Activated CD4-positive, alpha-beta memory T cell treated with anti-CD3 and anti-CD28 coated beads for 36 hours (primary cell): ENCODE measurements at regions of chr19 and their contacts with region 1.

Region 1: DNA sequence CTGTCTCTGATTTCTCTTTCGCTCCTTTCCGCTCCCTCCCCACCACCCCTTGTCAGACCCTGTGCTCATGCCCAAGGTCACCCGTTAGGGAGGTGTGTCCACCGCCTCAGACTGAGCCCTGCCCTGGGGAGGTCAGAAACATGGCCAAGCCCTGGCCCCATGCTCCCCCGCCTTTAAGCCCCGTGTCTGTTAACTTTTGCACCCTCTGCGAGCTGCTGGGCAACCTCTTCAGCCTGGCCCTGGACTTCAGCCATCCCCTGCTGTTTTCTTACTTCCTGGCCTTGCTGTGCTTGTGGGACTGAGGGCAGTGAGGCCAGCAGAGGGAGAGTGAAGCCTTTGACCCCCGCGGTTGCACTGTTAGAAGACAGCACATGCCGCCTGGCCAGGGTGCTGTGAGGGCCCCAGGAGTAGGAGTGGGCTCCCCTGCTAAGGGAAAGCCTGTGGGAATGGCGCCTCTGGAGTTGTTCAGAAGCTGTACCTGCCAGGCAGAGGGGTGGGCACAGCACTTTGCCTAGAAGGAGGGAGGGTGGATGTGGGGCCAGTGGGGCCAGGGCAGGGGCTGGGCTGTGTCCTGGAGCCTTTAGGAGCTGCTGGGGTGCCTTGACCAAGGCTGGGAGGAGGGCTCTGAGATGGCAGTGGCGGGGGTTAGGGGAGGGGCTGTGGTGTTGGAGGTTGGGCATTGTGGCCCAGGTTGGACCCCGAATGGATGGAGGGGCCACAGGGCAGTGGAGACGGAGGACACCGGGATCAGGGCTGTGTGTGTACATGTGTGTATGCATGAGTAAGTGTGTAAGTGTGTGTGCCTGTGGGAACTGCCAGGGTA is 7.9 kb downstream of the UPF1 start:
- DNase-seq: no peak
- H3K4me3 Mint-ChIP-seq: no peak overlapping the region
- H3K27ac Mint-ChIP-seq: peak overlapping the region; percentile 81
- H3K4me1 Mint-ChIP-seq: peaks cover 90% of the 10 kb centered on the region
- H3K27me3 Mint-ChIP-seq: no peaks in the 10 kb centered on the region

Region 2: GRCh38 chr19:18785179-18786128 is 54.2 kb before region 1 on chr19:
- CTCF ChIA-PET with region 1: no interaction called
- POLR2A ChIA-PET with region 1: no interaction called
- intact Hi-C with region 1: loop called (anchors 5 kb)
- DNase-seq: peak; percentile 83
- H3K4me3 Mint-ChIP-seq: no peak overlapping the region
- H3K27ac Mint-ChIP-seq: no peak overlapping the region
- H3K4me1 Mint-ChIP-seq: peaks cover 37% of the 10 kb centered on the region
- H3K27me3 Mint-ChIP-seq: peaks cover 46% of the 10 kb centered on the region